ENCODE measurements at regions of chr16 and their contacts with region 1.

Region 1: GRCh38 chr16:81778861-81779535 is at the start of gene PLCG2:
- DNase-seq: peak; percentile 59 to 84
- H3K4me3 ChIP-seq: peak within 1 kb of the TSS; percentile 66
- H3K27ac ChIP-seq: no peak within 1 kb of the TSS
- H3K4me1 ChIP-seq: peaks cover 4% of the 10 kb centered on the region; the same call in 1 of the 2 replicates
- H3K27me3 ChIP-seq: peaks cover 17% of the 10 kb centered on the region
- CTCF ChIP-seq: no peak
- total RNA-seq, gene PLCG2: 7.9 and 10.8 TPM in 2 replicates

Region 2: GRCh38 chr16:81266680-81267100 is 512.3 kb before region 1 on chr16:
- CTCF ChIA-PET with region 1: no interaction called
- POLR2A ChIA-PET with region 1: interaction called, 24 read pairs
- intact Hi-C with region 1: no loop called
- DNase-seq: peak; percentile 70 to 83
- H3K4me3 ChIP-seq: peak overlapping the region; percentile 28; the same call in 1 of the 2 replicates
- H3K27ac ChIP-seq: peak overlapping the region; percentile 20; the same call in 1 of the 2 replicates
- H3K4me1 ChIP-seq: peaks cover 17% of the 10 kb centered on the region
- H3K27me3 ChIP-seq: no peaks in the 10 kb centered on the region
- CTCF ChIP-seq: no peak

Region 3: DNA sequence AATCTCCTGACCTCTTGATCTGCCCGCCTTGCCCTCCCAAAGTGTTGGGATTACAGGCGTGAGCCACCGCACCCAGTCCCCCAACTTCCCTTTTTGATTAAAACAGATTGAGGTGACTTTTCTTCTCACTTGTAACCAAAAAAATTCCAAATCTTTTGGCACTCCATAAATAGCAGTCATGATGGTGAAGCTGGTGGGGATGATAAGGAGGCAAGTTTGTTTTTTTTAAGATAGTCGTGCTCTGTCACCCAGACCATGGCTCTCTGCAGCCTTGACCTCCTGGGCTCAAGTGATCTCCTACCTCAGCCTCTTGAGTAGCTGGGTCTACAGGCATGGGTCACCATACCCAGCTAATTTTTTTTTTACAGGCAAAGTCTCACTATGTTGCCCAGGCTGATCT is 34.6 kb before region 1 on chr16:
- CTCF ChIA-PET with region 1: interaction called, 18 read pairs
- POLR2A ChIA-PET with region 1: no interaction called
- intact Hi-C with region 1: no loop called
- DNase-seq: no peak
- H3K4me3 ChIP-seq: no peak overlapping the region
- H3K27ac ChIP-seq: no peak overlapping the region
- H3K4me1 ChIP-seq: peaks cover 5% of the 10 kb centered on the region; the same call in 1 of the 2 replicates
- H3K27me3 ChIP-seq: no peaks in the 10 kb centered on the region
- CTCF ChIP-seq: no peak

Region 4: GRCh38 chr16:81873843-81874752 is 95.1 kb after region 1 on chr16:
- CTCF ChIA-PET with region 1: no interaction called
- POLR2A ChIA-PET with region 1: no interaction called
- intact Hi-C with region 1: loop called (anchors 5 kb)
- DNase-seq: peak in 1 of 2 experiments; percentile 53
- H3K4me3 ChIP-seq: no peak overlapping the region
- H3K27ac ChIP-seq: no peak overlapping the region
- H3K4me1 ChIP-seq: no peaks in the 10 kb centered on the region
- H3K27me3 ChIP-seq: no peaks in the 10 kb centered on the region
- CTCF ChIP-seq: peak; percentile 86

Measured in PC-9 (cell line).